Heart right ventricle (tissue), 16 donors: ENCODE measurements at regions of chr20 and their contacts with region 1.

Region 1: DNA sequence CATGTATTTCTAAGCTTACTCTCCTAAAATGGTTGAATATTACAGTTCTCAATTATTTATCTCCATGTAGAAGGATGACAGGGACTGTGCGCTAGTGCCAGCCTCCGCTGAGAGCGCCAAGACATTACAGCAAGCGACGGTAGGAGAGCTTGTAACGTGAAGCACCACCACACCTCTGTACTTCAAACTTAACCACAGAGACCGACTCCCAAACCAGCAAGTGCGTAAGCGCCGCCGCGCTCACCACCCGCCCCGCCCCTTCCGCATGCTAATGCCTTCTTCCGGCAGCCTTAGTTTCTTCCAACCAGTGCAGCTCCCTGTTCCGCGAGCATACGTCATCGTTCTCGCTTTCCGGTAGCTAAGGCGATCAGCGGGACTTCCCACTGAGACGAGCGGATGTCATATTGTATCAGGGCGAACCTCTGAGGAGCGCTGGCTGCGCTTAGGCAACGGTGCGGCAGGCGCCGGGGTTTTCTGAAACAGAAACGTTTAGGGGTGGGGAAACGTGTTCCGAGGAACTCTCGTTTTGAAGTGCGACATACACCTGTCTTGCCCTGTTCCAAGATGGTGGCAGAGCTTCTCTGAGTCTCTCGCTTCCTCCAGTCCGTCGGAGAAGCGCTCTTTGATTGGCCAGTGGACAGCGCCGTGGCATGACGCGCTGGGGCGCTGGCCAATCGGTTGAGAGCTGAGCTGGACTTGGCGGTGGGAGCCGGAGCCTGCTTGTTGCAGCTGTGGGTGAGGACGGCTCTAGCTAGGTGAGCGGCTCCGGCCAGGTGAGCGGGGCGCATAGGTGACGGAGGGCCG is at the start of gene SEC23B:
- DNase-seq: peak; percentile 95 to 97
- ATAC-seq: peak; percentile 98 to 99 (median 99)
- H3K4me3 ChIP-seq: peak within 1 kb of the TSS; percentile 50 to 95 (median 79)
- H3K27ac ChIP-seq: peak within 1 kb of the TSS; percentile 80 to 100 (median 93)
- H3K4me1 ChIP-seq: peaks cover 0 to 47% (median 14%) of the 10 kb centered on the region in 9 donors
- H3K27me3 ChIP-seq: peaks cover 0 to 14% (median 10%) of the 10 kb centered on the region in 7 donors
- CTCF ChIP-seq: no peak
- total RNA-seq, gene SEC23B: 7.5 to 20.5 (median 10.9) TPM

Region 2: GRCh38 chr20:18287915-18288748 is 219.3 kb before region 1 on chr20 and contains the start of gene ZNF133:
- intact Hi-C with region 1: loop called in 1 of 10 experiments (anchors 5 kb)
- DNase-seq: peak; percentile 96 to 98
- ATAC-seq: peak; percentile 98 to 100 (median 99)
- H3K4me3 ChIP-seq: peak within 1 kb of the TSS; percentile 65 to 95 (median 83)
- H3K27ac ChIP-seq: peak within 1 kb of the TSS; percentile 91 to 100 (median 96)
- H3K4me1 ChIP-seq: peaks cover 0 to 19% (median 14%) of the 10 kb centered on the region in 9 donors
- H3K27me3 ChIP-seq: peaks cover 0 to 30% (median 16%) of the 10 kb centered on the region in 7 donors
- CTCF ChIP-seq: peak in 2 of 9 donors; percentile 12 to 22
- total RNA-seq, gene ZNF133: 4.9 to 7.2 (median 5.6) TPM

Region 3: DNA sequence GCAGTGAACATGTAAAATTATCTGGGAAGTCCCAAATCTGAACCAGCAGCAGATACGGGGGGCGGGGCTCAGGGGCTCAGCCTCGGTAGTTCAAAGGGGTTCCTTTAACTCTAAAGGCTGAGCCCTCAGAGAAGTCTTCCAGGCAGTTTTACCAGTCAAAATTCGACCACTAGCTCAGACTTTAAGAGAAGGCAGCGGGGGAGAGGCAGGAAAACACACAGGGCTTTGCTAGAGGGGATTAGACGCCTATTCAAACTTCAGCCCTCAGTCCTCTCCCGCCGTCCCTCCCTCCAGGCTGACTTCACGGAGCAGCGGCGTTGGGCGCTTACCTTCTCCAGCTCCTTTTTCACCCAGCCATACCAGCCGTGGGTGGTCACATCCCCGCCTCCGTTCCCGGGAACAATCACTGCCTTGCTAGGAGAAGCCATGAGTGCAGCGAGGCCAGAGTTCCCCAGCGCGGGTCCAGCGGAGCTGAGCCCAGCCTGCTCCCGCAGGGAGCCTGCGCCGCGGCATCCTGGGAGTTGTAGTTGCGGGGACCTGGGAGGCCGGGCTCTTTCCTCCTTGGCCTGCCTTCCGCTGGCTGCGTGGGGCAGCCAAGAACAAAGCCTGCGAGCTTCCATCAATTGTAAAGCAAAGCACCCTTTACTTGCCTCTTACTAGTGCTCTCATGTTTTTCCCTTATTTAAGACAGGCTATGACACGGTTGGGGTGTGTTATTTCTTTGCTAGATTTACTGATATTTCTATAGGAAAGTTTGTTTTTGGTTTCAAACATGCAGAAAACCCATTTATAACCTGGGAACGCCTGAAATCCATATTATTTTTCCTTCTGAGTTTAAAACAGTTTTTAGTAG is 10.5 kb before region 1 on chr20 and contains the start of gene RBBP9:
- intact Hi-C with region 1: loop called in 2 of 10 experiments (anchors 1 kb)
- DNase-seq: peak; percentile 87 to 90
- ATAC-seq: peak; percentile 99 to 100 (median 100)
- H3K4me3 ChIP-seq: peak within 1 kb of the TSS; percentile 55 to 87 (median 76)
- H3K27ac ChIP-seq: peak within 1 kb of the TSS in 8 of 10 donors; percentile 51 to 75 (median 64)
- H3K4me1 ChIP-seq: peaks cover 2 to 19% (median 15%) of the 10 kb centered on the region in 9 donors
- H3K27me3 ChIP-seq: no peaks in the 10 kb centered on the region
- CTCF ChIP-seq: peak in 1 of 9 donors; percentile 8
- total RNA-seq, gene RBBP9: 4.7 to 10.3 (median 6.8) TPM

Region 4: GRCh38 chr20:18566892-18567742 is 59.7 kb after region 1 on chr20 and contains the start of gene SMIM26:
- intact Hi-C with region 1: loop called in 5 of 10 experiments (anchors 2 to 5 kb)
- DNase-seq: peak; percentile 93 to 94
- ATAC-seq: peak; percentile 99 to 100 (median 100)
- H3K4me3 ChIP-seq: peak within 1 kb of the TSS; percentile 44 to 86 (median 77)
- H3K27ac ChIP-seq: peak within 1 kb of the TSS; percentile 42 to 94 (median 84)
- H3K4me1 ChIP-seq: peaks cover 0 to 20% (median 12%) of the 10 kb centered on the region in 9 donors
- H3K27me3 ChIP-seq: no peaks in the 10 kb centered on the region
- CTCF ChIP-seq: no peak
- total RNA-seq, gene SMIM26: 80.7 to 119 (median 105) TPM